BJ (cell line): ENCODE measurements at regions of chr2 and their contacts with region 1.

Region 1: GRCh38 chr2:8677646-8678592 is 3.9 kb upstream of the ID2 start:
- DNase-seq: no peak
- H3K4me3 ChIP-seq: peak overlapping the region; percentile 48
- H3K27me3 ChIP-seq: no peaks in the 10 kb centered on the region
- CTCF ChIP-seq: no peak

Region 2: DNA sequence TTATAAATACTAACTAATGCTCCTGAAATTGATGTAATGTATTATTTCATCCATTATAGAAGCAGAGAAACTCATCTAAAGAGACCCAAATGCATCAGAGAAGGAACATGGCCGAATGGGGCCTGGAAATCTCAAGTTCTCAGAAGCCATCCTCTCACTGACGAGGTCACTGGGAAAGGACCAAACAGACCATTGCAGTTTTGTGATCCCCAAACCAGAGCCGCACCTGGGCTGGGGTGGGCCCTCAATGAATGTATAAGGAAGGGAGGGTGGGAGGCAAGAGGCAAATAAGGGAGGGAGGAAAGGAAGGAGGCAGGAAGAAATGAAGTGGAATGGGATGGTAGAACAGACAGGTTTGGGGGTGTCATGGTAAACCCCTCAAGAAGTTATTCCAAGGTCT is 241.3 kb before region 1 on chr2:
- CTCF ChIA-PET with region 1: no interaction called
- POLR2A ChIA-PET with region 1: interaction called, 15 read pairs
- DNase-seq: no peak
- H3K4me3 ChIP-seq: no peak overlapping the region
- H3K27me3 ChIP-seq: no peaks in the 10 kb centered on the region
- CTCF ChIP-seq: no peak

Region 3: DNA sequence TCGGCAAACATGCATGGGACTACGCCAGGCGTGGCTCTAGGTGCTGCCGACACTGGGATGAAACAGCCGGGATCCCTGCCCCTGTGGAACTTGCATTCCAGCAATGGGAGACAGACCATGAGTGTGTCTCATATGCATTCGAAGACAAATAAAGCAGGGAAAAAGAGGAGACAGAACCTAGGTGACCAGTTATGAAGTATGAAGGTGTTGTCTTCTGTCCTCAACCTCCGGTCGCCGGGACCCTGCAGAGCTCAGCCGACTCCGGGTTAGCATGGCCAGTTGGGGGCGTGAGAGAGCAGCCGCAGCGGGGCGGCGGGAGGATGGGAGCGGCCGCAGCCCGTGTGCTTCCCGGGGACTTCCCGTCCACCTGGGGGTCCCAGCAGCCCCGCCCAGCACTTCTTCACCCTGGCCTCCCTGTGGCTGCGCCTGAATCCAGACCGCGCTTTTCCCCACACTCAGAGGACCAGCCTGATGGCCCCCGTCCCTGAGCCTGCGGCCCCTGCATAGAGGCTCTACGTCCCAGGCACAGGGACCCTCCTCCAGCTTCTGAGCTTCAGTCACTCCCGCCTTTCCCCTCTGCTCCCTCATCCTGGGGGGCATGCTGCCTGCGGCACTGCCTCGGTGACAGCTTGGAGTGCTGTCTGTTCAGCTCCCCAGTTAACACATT is 15.4 kb after region 1 on chr2:
- CTCF ChIA-PET with region 1: no interaction called
- POLR2A ChIA-PET with region 1: no interaction called
- DNase-seq: no peak
- H3K4me3 ChIP-seq: no peak overlapping the region
- H3K27me3 ChIP-seq: no peaks in the 10 kb centered on the region
- CTCF ChIP-seq: peak; percentile 58